B cell (primary cell): ENCODE measurements at regions of chr2 and their contacts with region 1.

Region 1: DNA sequence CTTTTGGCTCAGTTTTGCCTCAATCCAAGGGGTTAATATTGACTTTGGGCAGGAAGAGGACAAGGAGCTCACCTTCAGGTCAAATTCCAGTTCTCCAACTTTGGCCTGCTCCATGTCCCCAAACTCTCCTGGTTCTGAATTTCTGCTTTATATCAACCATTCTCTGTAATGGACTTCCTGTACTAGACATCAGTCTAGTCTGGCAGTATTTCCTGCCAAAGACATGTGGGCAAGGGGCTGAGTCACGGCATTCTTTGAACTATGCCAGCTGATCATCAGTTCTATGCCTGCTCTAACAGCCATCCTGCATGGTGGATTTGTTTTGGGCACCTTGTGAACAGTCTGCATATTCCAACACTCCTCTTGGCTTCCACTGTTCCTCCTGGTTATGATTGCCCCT is 199.4 kb downstream of the ZEB2 start:
- DNase-seq: peak; percentile 18
- ATAC-seq: peak; percentile 63
- H3K4me3 ChIP-seq: no peak overlapping the region
- H3K4me3 Mint-ChIP-seq: peak overlapping the region; percentile 50
- H3K27ac ChIP-seq: no peak overlapping the region
- H3K27ac Mint-ChIP-seq: no peak overlapping the region
- H3K4me1 ChIP-seq: peaks cover 23 to 25% of the 10 kb centered on the region in 2 donors
- H3K4me1 Mint-ChIP-seq: peaks cover 42% of the 10 kb centered on the region
- H3K27me3 ChIP-seq: no peaks in the 10 kb centered on the region
- H3K27me3 Mint-ChIP-seq: no peaks in the 10 kb centered on the region
- CTCF ChIP-seq: no peak

Region 2: GRCh38 chr2:144281476-144281875 is 39.0 kb before region 1 on chr2:
- CTCF ChIA-PET with region 1: no interaction called
- POLR2A ChIA-PET with region 1: no interaction called
- intact Hi-C with region 1: loop called (anchors 5 kb)
- DNase-seq: no peak
- ATAC-seq: no peak
- H3K4me3 ChIP-seq: no peak overlapping the region
- H3K4me3 Mint-ChIP-seq: no peak overlapping the region
- H3K27ac ChIP-seq: no peak overlapping the region
- H3K27ac Mint-ChIP-seq: no peak overlapping the region
- H3K4me1 ChIP-seq: no peaks in the 10 kb centered on the region
- H3K4me1 Mint-ChIP-seq: peaks cover 14% of the 10 kb centered on the region
- H3K27me3 ChIP-seq: no peaks in the 10 kb centered on the region
- H3K27me3 Mint-ChIP-seq: no peaks in the 10 kb centered on the region
- CTCF ChIP-seq: no peak

Region 3: DNA sequence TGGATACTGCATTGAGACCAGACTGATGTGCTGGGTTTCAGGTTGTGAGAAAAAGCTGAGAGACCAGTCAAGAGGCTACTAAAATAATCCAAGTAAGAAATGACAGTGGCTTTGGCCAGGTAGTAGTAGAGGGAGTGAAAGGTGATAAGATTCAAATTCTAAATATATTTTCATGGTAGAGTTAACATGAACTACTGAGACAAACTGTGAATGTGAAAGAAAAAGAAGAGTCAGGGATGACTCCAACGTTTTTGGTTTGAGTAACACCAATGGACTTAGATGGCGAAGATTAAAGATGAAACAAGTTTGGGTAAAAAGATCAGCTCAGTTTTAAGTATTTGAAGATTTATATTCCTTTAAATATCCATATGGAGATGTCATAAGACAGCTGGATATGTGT is 10.0 kb before region 1 on chr2:
- CTCF ChIA-PET with region 1: no interaction called
- POLR2A ChIA-PET with region 1: no interaction called
- intact Hi-C with region 1: no loop called
- DNase-seq: no peak
- ATAC-seq: no peak
- H3K4me3 ChIP-seq: no peak overlapping the region
- H3K4me3 Mint-ChIP-seq: peak overlapping the region; percentile 17
- H3K27ac ChIP-seq: no peak overlapping the region
- H3K27ac Mint-ChIP-seq: no peak overlapping the region
- H3K4me1 ChIP-seq: no peaks in the 10 kb centered on the region
- H3K4me1 Mint-ChIP-seq: peaks cover 26% of the 10 kb centered on the region
- H3K27me3 ChIP-seq: no peaks in the 10 kb centered on the region
- H3K27me3 Mint-ChIP-seq: no peaks in the 10 kb centered on the region
- CTCF ChIP-seq: no peak